Activated CD4-positive, alpha-beta T cell treated with anti-CD3 and anti-CD28 coated beads, Interleukin-2, amount 10 ng/mL, durations not matched to agents 24 days and 14 days (primary cell): ENCODE measurements at regions of chr14 and their contacts with region 1.

Region 1: GRCh38 chr14:98227000-98227726 is 1044.8 kb downstream of the BCL11B start:
- DNase-seq: peak; percentile 82
- H3K4me3 Mint-ChIP-seq: peak overlapping the region; percentile 70
- H3K27ac Mint-ChIP-seq: peak overlapping the region; percentile 87
- H3K4me1 Mint-ChIP-seq: peaks cover 60% of the 10 kb centered on the region
- H3K27me3 Mint-ChIP-seq: no peaks in the 10 kb centered on the region

Region 2: DNA sequence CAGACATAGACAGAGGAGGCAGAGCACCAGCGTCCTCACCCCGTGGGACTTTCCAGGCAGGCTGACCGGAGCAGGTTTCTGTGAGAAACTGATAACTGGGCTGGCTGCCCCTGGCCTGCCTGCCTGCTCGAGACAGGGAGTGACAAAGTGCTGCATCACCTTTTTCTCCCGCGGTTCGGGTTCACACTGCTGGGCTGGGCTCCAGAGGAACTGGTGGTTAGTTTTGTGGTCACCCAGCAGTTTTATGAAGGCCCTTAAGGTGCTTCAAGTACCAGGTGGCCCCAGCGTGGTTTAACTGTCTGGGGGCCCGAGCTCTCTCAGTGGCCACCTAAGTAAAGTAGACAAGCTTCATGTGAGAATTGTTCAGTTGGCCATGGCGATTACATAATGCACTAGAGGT is 28.8 kb before region 1 on chr14:
- intact Hi-C with region 1: loop called (anchors 2 kb)
- DNase-seq: peak; percentile 86
- H3K4me3 Mint-ChIP-seq: peak overlapping the region; percentile 5
- H3K27ac Mint-ChIP-seq: peak overlapping the region; percentile 30
- H3K4me1 Mint-ChIP-seq: peaks cover 78% of the 10 kb centered on the region
- H3K27me3 Mint-ChIP-seq: no peaks in the 10 kb centered on the region

Region 3: DNA sequence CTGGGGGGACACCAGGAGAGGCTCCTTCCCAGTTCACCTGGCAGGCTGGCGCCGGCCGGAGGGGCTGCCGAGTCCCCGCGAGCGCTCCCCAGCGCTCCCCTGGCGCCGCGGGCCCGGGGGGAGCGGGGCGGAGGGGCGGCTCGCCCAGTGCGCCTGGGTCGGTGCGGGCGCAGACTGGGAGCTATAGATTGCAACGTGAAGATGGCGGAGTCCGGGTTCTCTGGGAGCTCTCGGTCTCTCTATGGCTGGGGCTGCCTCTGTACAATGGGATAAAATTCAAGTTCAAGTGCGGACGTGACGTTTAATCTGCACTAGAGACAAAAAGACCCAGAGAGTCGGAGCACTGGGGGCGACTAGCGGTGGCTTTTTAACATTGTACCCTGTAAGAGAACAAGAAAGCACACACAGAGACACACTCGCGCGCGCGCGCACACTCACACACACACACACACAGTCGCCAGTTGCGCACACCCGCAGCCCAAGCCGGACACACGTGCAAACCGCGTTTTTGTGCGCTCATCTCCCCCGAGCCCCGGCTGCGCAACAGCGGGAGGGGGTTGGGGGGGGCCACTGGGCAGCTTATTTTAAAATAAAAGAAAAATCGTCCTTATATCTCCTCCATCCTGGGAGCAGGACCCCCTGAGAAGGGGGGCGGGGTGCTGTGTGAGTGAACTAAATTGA is 1044.9 kb after region 1 on chr14 and contains the start of gene BCL11B:
- intact Hi-C with region 1: loop called (anchors 5 kb)
- DNase-seq: peak; percentile 96
- H3K4me3 Mint-ChIP-seq: peak within 1 kb of the TSS; percentile 91
- H3K27ac Mint-ChIP-seq: peak within 1 kb of the TSS; percentile 95
- H3K4me1 Mint-ChIP-seq: peaks cover 42% of the 10 kb centered on the region
- H3K27me3 Mint-ChIP-seq: peaks cover 13% of the 10 kb centered on the region
- total RNA-seq, gene BCL11B: 48.2 and 48.5 TPM in 2 replicates